Activated CD4-positive, alpha-beta T cell treated with anti-CD3 and anti-CD28 coated beads for 36 hours (primary cell): ENCODE measurements at regions of chr12 and their contacts with region 1.

Region 1: GRCh38 chr12:45893240-45893639 is 97.1 kb downstream of the SCAF11 start:
- DNase-seq: peak; percentile 23
- ATAC-seq: peak; percentile 61
- H3K4me3 Mint-ChIP-seq: no peak overlapping the region
- H3K27ac Mint-ChIP-seq: no peak overlapping the region
- H3K4me1 Mint-ChIP-seq: peaks cover 24% of the 10 kb centered on the region
- H3K27me3 Mint-ChIP-seq: no peaks in the 10 kb centered on the region

Region 2: DNA sequence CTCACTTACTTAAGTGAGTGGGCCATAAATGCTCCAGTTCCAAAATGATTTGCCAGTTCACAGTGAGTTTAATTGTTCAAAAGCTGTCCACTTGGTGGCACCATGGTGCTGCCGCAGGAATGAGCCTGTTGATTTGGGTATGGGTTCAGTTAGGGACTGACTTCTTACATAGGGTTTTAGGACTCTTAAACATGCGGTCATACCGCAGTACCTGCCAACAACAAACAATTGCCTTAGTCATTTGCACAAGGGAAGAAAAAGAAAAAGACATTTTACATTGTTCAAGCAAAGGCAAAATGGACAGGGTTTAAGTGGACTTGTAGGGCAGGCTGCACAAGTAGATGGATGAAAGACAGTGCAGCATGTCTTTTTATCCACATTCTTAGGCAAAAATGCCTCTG is 762.4 kb before region 1 on chr12:
- CTCF ChIA-PET with region 1: no interaction called
- POLR2A ChIA-PET with region 1: no interaction called
- intact Hi-C with region 1: loop called in 1 of 2 experiments (anchors 10 kb)
- DNase-seq: peak; percentile 67
- ATAC-seq: peak; percentile 84
- H3K4me3 Mint-ChIP-seq: no peak overlapping the region
- H3K27ac Mint-ChIP-seq: no peak overlapping the region
- H3K4me1 Mint-ChIP-seq: no peaks in the 10 kb centered on the region
- H3K27me3 Mint-ChIP-seq: peaks cover 9% of the 10 kb centered on the region

Region 3: GRCh38 chr12:45944771-45945170 is 51.5 kb after region 1 on chr12:
- CTCF ChIA-PET with region 1: no interaction called
- POLR2A ChIA-PET with region 1: no interaction called
- intact Hi-C with region 1: no loop called
- DNase-seq: no peak
- ATAC-seq: no peak
- H3K4me3 Mint-ChIP-seq: no peak overlapping the region
- H3K27ac Mint-ChIP-seq: no peak overlapping the region
- H3K4me1 Mint-ChIP-seq: no peaks in the 10 kb centered on the region
- H3K27me3 Mint-ChIP-seq: no peaks in the 10 kb centered on the region

Region 4: GRCh38 chr12:45986641-45987338 is 93.5 kb after region 1 on chr12:
- CTCF ChIA-PET with region 1: no interaction called
- POLR2A ChIA-PET with region 1: no interaction called
- intact Hi-C with region 1: no loop called
- DNase-seq: no peak
- ATAC-seq: no peak
- H3K4me3 Mint-ChIP-seq: no peak overlapping the region
- H3K27ac Mint-ChIP-seq: peak overlapping the region; percentile 13
- H3K4me1 Mint-ChIP-seq: peaks cover 66% of the 10 kb centered on the region
- H3K27me3 Mint-ChIP-seq: no peaks in the 10 kb centered on the region